ENCODE measurements at regions of chr19 and their contacts with region 1.

Region 1: DNA sequence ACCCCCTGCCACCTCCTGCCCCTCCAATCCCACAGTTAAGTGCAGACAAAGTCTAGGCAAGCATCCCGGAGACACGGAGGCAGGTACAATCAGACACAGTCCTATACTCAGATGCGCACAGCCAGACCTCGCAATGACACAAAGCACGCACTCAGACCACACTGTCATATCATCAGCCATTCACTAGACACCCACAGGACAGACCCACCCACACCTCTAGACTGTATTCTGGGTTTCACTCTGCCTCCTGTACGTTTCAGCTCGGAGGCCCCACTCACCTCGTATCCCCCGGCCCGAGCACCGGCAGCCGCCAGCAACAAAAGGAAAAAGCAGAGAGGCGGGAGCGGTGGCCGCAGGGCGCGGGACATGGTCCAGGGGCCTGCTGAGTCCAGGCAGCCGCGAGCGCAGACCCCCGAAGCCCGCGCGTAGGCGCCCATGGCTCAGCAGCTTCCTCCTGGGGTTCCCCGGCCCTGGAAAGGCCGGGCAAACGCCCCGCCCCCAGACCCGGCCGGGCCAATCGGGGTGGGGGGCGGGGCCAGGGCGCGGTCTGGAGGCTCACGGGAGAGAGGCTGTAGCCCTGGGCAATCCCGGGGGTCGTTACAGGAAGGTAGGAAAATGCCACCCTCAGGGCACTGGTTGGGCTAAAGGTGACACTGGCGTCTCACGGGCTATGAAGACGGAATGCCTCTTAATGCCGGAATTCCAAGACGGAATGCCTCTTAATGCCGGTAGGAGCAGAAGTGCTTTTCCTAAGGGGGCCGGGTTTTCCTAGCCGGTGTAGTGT is at the starts of genes MAN2B1 and WDR83:
- DNase-seq: no peak
- ATAC-seq: peak; percentile 83
- H3K4me3 ChIP-seq: peak within 1 kb of the TSS; percentile 91
- H3K27ac ChIP-seq: peak within 1 kb of the TSS; percentile 92
- H3K4me1 ChIP-seq: peaks cover 30% of the 10 kb centered on the region
- H3K27me3 ChIP-seq: no peaks in the 10 kb centered on the region
- CTCF ChIP-seq: no peak
- EP300 ChIP-seq: no peak
- POLR2A ChIP-seq: peak; percentile 80
- RAD21 ChIP-seq: no peak
- polyA plus RNA-seq, gene MAN2B1: 7.6 to 33.6 TPM
- polyA plus RNA-seq, gene WDR83: 0.58 to 2.3 TPM

Region 2: DNA sequence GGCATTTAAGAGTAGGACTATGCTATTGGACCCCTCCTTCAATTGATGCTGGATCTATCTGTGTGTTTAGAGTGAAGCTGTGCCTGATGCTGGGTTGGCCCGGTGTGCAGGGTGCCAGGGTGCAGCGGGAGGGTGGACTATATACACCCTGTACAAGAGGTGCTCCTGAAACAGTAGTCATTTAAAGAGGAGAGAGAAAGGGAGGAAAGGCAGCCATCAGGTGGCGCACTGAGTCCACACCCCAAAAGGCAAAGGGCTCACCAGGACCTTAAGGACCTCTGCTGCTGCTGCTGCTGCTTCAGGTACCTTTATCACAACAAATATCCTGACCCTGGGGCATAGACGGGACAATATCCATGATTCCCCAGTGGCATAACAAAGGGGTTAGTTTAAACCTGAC is 464.2 kb before region 1 on chr19:
- CTCF ChIA-PET with region 1: no interaction called
- POLR2A ChIA-PET with region 1: no interaction called
- RAD21 ChIA-PET with region 1: no interaction called
- SMC1A ChIA-PET with region 1: no interaction called
- in situ Hi-C with region 1: no loop called
- intact Hi-C with region 1: loop called (anchors 5 kb)
- DNase-seq: no peak
- ATAC-seq: peak; percentile 46; the same call in 2 of the 3 replicates
- H3K4me3 ChIP-seq: no peak overlapping the region
- H3K27ac ChIP-seq: no peak overlapping the region
- H3K4me1 ChIP-seq: no peaks in the 10 kb centered on the region
- H3K27me3 ChIP-seq: no peaks in the 10 kb centered on the region
- CTCF ChIP-seq: peak in 2 of 3 experiments; percentile 36 to 61; a peak in 3 of 6 replicates
- EP300 ChIP-seq: no peak
- POLR2A ChIP-seq: no peak
- RAD21 ChIP-seq: peak; percentile 56

Region 3: DNA sequence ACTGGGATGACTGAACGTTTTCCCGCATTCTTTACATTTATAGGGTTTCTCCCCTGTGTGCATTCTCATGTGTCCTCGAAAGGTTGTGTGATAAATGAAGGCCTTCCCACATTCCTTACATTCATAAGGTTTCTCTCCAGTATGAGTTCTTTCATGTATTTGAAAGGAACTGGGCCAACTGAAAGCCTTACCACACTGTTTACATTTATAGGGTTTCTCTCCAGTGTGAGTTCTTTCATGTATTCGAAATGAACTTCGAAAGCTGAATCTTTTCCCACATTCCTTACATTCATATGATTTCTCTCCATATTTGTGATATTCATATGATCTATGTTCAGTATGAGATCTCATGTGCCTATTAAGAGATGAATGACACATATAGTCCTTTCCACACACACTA is 201.2 kb before region 1 on chr19:
- CTCF ChIA-PET with region 1: no interaction called
- POLR2A ChIA-PET with region 1: no interaction called
- RAD21 ChIA-PET with region 1: no interaction called
- SMC1A ChIA-PET with region 1: no interaction called
- in situ Hi-C with region 1: no loop called
- intact Hi-C with region 1: no loop called
- DNase-seq: no peak
- ATAC-seq: no peak
- H3K4me3 ChIP-seq: no peak overlapping the region
- H3K27ac ChIP-seq: no peak overlapping the region
- H3K4me1 ChIP-seq: no peaks in the 10 kb centered on the region
- H3K27me3 ChIP-seq: no peaks in the 10 kb centered on the region
- CTCF ChIP-seq: no peak
- EP300 ChIP-seq: no peak
- POLR2A ChIP-seq: no peak
- RAD21 ChIP-seq: no peak

Region 4: GRCh38 chr19:12564016-12564664 is 102.3 kb before region 1 on chr19:
- CTCF ChIA-PET with region 1: interaction called, 16 read pairs
- POLR2A ChIA-PET with region 1: no interaction called
- RAD21 ChIA-PET with region 1: interaction called, 9 read pairs
- SMC1A ChIA-PET with region 1: interaction called, 10 read pairs
- in situ Hi-C with region 1: loop called (anchors 5 kb)
- intact Hi-C with region 1: no loop called
- DNase-seq: peak; percentile 65
- ATAC-seq: peak; percentile 95
- H3K4me3 ChIP-seq: no peak overlapping the region
- H3K27ac ChIP-seq: no peak overlapping the region
- H3K4me1 ChIP-seq: no peaks in the 10 kb centered on the region
- H3K27me3 ChIP-seq: no peaks in the 10 kb centered on the region
- CTCF ChIP-seq: peak; percentile 98 to 99 (median 99)
- EP300 ChIP-seq: no peak
- POLR2A ChIP-seq: no peak
- RAD21 ChIP-seq: peak; percentile 99

Region 5: DNA sequence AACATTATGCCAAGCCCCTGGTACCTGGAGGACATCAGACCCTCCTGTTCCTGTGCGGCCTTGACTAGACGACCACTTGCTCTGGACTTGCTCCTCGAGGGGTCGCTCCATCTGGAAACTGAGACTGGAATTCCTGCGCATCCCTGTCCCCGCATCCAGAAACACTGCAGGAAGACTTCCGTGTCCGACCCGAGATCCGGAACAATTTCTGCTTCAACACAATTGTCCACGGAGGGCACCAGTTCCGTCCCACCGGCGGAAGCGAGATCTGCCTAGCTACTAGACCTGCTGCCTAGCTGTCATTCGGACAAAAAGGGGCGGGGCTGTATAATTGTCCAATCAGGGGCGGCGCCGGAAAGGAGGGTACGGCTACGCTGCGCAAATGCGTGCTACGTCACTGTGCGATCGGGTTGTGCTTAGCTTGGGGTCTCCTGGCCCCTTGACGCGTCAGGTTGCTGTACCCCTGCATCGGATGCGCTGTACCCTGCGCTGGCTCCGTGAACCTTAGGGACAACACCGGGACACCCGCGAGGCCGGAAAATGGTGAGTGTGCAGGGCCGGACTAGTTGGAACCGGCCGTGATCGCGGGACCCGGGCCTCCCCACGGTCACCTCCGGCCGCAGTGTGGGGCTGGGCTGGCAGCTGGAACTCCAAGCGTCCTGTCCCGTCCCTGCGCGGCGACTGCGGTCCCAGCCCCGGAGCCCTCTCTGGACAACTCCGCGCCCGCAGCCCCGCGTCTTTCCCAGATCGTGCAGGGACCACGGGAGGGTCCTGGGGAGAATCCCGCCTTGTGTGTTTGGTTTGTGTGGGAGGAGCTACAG is 55.7 kb before region 1 on chr19 and contains the starts of genes ZNF490 and ZNF791:
- CTCF ChIA-PET with region 1: interaction called, 9 read pairs
- POLR2A ChIA-PET with region 1: interaction called, 15 read pairs
- RAD21 ChIA-PET with region 1: interaction called, 9 read pairs
- SMC1A ChIA-PET with region 1: interaction called, 10 read pairs
- in situ Hi-C with region 1: no loop called
- intact Hi-C with region 1: loop called (anchors 2 kb)
- DNase-seq: peak; percentile 89
- ATAC-seq: peak; percentile 83
- H3K4me3 ChIP-seq: peak within 1 kb of the TSS; percentile 96
- H3K27ac ChIP-seq: peak within 1 kb of the TSS; percentile 95
- H3K4me1 ChIP-seq: 0 out of 2 replicates have a peak, but pooled peaks cover 7% of the 10 kb centered on the region
- H3K27me3 ChIP-seq: no peaks in the 10 kb centered on the region
- CTCF ChIP-seq: no peak
- EP300 ChIP-seq: 0 out of 4 replicates have a peak, but pooled peaks of 1 of the 2 experiments have one; percentile 16
- POLR2A ChIP-seq: peak; percentile 98
- RAD21 ChIP-seq: no peak
- polyA plus RNA-seq, gene ZNF490: 0.57 to 1.4 TPM
- polyA plus RNA-seq, gene ZNF791: 7.5 to 9.2 TPM

Region 6: DNA sequence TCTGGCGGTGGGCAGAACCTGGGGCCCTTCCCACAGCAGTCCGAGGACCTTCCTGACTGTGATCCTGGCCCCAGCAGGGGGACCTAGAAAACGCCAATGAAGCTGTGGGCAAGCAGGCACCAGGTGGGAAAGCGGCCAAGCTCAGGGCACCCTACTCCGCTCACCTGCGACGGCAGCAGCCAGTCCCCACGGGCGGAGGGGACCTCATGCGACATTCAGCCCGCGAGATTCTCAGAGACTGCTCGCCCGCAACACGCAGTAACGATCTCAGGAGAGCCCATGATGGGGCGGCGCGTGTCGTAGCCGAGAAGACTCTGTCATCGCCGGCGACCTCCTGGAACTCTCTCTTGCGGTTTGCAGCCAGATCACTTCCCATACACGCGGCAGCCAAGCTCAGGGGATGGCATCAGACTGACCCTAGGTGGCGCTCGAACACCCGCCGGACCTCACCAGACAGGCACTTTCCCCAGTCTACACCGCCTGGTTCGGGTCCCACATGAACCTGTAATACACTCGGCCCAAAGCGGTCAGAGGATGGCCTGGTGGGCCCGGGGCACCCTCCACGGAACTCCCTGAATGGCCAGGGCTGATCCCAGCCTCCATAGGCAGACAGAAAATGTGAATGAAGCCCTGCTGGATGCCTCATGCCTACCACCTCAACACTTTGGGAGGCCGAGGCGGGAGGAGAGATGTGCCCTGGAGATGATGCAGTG is 26.4 kb before region 1 on chr19:
- CTCF ChIA-PET with region 1: interaction called, 15 read pairs
- POLR2A ChIA-PET with region 1: no interaction called
- RAD21 ChIA-PET with region 1: no interaction called
- SMC1A ChIA-PET with region 1: interaction called, 4 read pairs
- in situ Hi-C with region 1: no loop called
- intact Hi-C with region 1: no loop called
- DNase-seq: peak; percentile 53
- ATAC-seq: peak; percentile 98
- H3K4me3 ChIP-seq: no peak overlapping the region
- H3K27ac ChIP-seq: no peak overlapping the region
- H3K4me1 ChIP-seq: 0 out of 2 replicates have a peak, but pooled peaks cover 5% of the 10 kb centered on the region
- H3K27me3 ChIP-seq: no peaks in the 10 kb centered on the region
- CTCF ChIP-seq: peak; percentile 74 to 93 (median 89); a peak in 5 of 6 replicates
- EP300 ChIP-seq: no peak
- POLR2A ChIP-seq: peak; percentile 54
- RAD21 ChIP-seq: peak; percentile 51; the same call in 1 of the 2 replicates

Region 7: GRCh38 chr19:12681074-12681951 is 14.9 kb after region 1 on chr19 and contains the start of gene DHPS:
- CTCF ChIA-PET with region 1: interaction called, 13 read pairs
- POLR2A ChIA-PET with region 1: interaction called, 7 read pairs
- RAD21 ChIA-PET with region 1: interaction called, 4 read pairs
- SMC1A ChIA-PET with region 1: interaction called, 4 read pairs
- in situ Hi-C with region 1: no loop called
- intact Hi-C with region 1: no loop called
- DNase-seq: peak; percentile 95
- ATAC-seq: peak; percentile 91
- H3K4me3 ChIP-seq: peak within 1 kb of the TSS; percentile 99
- H3K27ac ChIP-seq: peak within 1 kb of the TSS; percentile 98
- H3K4me1 ChIP-seq: peaks cover 4% of the 10 kb centered on the region; the same call in 1 of the 2 replicates
- H3K27me3 ChIP-seq: no peaks in the 10 kb centered on the region
- CTCF ChIP-seq: no peak
- EP300 ChIP-seq: no peak
- POLR2A ChIP-seq: peak; percentile 98
- RAD21 ChIP-seq: no peak
- polyA plus RNA-seq, gene DHPS: 36.4 to 76.0 TPM